CD8-positive, alpha-beta memory T cell (primary cell): ENCODE measurements at regions of chr12 and their contacts with region 1.

Region 1: DNA sequence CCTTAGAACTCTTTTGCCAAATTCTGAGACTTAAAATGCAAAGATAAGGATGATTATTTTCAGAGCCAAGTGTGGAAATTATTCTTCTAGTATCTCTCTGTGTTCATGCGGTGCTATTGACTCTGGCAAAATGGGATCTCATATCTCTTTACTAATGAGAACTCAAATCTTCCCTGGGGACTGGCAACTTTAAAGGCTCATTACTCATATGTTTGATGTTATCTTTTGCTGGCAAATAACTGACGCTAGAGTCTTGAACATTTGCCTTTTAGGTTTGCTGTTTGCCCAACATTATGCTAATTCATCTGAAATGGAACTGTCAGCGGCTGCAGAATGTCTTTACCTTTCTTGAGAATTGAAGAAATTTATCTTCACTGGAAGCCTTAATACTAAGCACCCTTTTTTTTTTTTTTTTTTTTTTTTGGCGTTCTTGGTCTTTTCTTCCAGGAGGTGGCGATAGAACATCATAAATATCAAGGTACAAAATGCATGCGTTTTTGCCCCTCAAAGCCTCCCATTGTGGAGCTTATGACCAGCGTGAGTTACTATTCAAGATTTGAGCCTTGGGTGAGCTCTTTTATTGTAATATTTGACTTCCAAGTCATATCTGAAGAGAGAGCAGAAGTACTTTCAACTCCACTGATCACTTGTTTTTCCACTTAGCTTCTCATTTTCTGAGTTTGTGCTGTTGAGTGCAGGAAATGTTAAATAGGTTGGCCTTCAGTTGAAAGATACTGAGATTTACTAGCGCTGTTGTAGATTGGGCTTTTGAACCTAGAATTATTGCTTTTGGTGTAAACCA is 86.6 kb downstream of the CAND1 start:
- DNase-seq: peak in 2 of 5 donors; percentile 43 to 45
- H3K4me3 ChIP-seq: no peak overlapping the region
- H3K4me3 Mint-ChIP-seq: peak overlapping the region in 1 of 7 donors; percentile 34
- H3K27ac ChIP-seq: no peak overlapping the region
- H3K27ac Mint-ChIP-seq: peak overlapping the region in 1 of 8 donors; percentile 2
- H3K4me1 ChIP-seq: peaks cover 4% of the 10 kb centered on the region
- H3K4me1 Mint-ChIP-seq: peaks cover 9 to 15% (median 10%) of the 10 kb centered on the region in 3 donors
- H3K27me3 ChIP-seq: no peaks in the 10 kb centered on the region
- H3K27me3 Mint-ChIP-seq: peaks cover 0 to 3% of the 10 kb centered on the region in 2 donors

Region 2: DNA sequence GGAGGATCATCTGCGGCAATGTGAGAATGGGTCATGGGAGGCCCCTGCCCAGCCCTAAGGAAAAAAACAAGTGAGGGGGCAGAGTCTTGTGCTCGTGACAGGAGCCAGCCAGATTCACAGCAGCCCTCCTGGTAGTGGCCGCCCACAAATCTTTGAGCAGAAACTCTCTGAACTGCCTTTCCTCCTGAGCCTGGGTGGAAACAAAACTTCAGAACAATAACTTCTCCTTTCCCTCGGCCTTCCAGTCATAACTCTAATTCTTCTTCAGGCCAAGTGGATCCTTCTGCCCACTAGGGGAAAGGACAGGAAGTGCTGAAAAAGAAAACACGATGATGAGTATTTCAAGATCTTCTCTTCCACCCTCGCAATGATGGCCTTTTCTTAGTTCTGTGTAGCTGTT is 102.0 kb after region 1 on chr12:
- CTCF ChIA-PET with region 1: no interaction called
- POLR2A ChIA-PET with region 1: no interaction called
- DNase-seq: no peak
- H3K4me3 ChIP-seq: no peak overlapping the region
- H3K4me3 Mint-ChIP-seq: peak overlapping the region in 1 of 7 donors; percentile 4
- H3K27ac ChIP-seq: no peak overlapping the region
- H3K27ac Mint-ChIP-seq: no peak overlapping the region
- H3K4me1 ChIP-seq: peaks cover 1% of the 10 kb centered on the region
- H3K4me1 Mint-ChIP-seq: peaks cover 3 to 5% (median 4%) of the 10 kb centered on the region in 3 donors
- H3K27me3 ChIP-seq: no peaks in the 10 kb centered on the region
- H3K27me3 Mint-ChIP-seq: peaks cover 0 to 4% of the 10 kb centered on the region in 2 donors

Region 3: DNA sequence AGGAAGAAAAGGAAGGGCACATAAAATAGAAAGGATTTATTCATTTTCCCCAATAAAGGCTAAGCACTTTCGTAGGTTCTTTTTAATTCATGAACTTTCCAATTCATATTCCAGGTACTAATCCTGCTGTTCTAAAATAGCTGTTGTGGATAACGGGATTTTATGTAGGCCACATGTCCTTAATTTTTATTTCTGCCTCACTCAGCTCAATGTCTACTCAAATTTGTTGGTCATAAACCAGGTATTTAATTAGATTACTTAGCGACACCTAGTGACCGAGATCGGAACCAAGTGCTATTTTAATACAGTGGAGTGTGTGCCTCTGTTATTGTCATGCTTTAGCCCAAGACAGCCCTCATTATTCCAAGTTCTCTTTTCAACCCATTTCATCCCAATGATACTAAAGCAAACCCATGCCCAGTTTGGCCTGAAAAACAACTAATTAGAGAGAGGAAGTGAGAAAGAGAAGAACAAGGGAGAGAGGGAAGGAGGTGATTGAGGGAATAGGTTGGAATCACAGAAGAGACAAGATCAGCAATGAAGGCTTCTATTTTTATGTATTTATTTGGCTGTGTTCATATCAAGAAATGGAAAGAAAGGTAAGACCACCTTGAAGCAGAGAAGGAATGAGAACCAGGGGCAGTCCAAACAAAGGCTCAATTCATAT is 587.6 kb after region 1 on chr12:
- CTCF ChIA-PET with region 1: interaction called, 142 read pairs
- POLR2A ChIA-PET with region 1: interaction called, 33 read pairs
- DNase-seq: peak; percentile 23 to 67 (median 48)
- H3K4me3 ChIP-seq: no peak overlapping the region
- H3K4me3 Mint-ChIP-seq: no peak overlapping the region
- H3K27ac ChIP-seq: no peak overlapping the region
- H3K27ac Mint-ChIP-seq: peak overlapping the region in 1 of 8 donors; percentile 54
- H3K4me1 ChIP-seq: no peaks in the 10 kb centered on the region
- H3K4me1 Mint-ChIP-seq: peaks cover 4 to 9% (median 8%) of the 10 kb centered on the region in 3 donors
- H3K27me3 ChIP-seq: no peaks in the 10 kb centered on the region
- H3K27me3 Mint-ChIP-seq: peaks cover 0 to 2% of the 10 kb centered on the region in 2 donors

Region 4: GRCh38 chr12:68250454-68250853 is 894.7 kb after region 1 on chr12:
- CTCF ChIA-PET with region 1: no interaction called
- POLR2A ChIA-PET with region 1: interaction called, 16 read pairs
- DNase-seq: no peak
- H3K4me3 ChIP-seq: no peak overlapping the region
- H3K4me3 Mint-ChIP-seq: no peak overlapping the region
- H3K27ac ChIP-seq: no peak overlapping the region
- H3K27ac Mint-ChIP-seq: no peak overlapping the region
- H3K4me1 ChIP-seq: no peaks in the 10 kb centered on the region
- H3K4me1 Mint-ChIP-seq: no peaks in the 10 kb centered on the region
- H3K27me3 ChIP-seq: no peaks in the 10 kb centered on the region
- H3K27me3 Mint-ChIP-seq: peaks cover 4 to 12% of the 10 kb centered on the region in 2 donors